Natural killer cell (primary cell): ENCODE measurements at regions of chr9 and their contacts with region 1.

Region 1: DNA sequence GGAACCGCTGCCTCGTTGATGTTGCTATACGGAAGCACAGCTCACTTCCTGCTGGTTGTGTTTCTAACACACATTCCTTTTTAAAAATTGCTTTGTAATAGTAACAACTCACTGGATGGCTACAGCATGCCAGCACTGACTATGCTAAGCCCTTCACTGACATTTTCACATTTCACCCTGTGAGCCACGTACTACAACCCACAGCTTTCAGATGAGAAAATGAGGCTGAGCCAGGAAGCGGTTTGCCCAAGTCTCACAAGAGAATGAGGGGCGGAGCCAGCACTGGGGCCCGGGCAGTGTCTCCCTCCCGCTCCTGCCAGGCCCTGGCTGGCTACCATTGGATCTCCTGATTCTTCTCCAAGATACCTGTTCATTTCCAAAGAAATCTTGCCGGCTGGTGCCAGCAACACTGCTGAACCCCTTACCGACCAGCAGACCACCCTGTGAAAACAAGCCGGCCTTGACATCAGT is 38.3 kb downstream of the FAM78A start:
- DNase-seq: peak; percentile 79 to 93
- ATAC-seq: peak; percentile 82 to 84 (median 82)
- H3K4me3 ChIP-seq: peak overlapping the region; percentile 14
- H3K4me3 Mint-ChIP-seq: peak overlapping the region; percentile 89
- H3K27ac ChIP-seq: peak overlapping the region; percentile 86
- H3K27ac Mint-ChIP-seq: peak overlapping the region; percentile 95 to 97
- H3K4me1 ChIP-seq: peaks cover 64% of the 10 kb centered on the region
- H3K4me1 Mint-ChIP-seq: peaks cover 40 to 53% of the 10 kb centered on the region in 2 donors
- H3K27me3 ChIP-seq: no peaks in the 10 kb centered on the region
- H3K27me3 Mint-ChIP-seq: no peaks in the 10 kb centered on the region
- CTCF ChIP-seq: no peak

Region 2: GRCh38 chr9:131187957-131188356 is 50.0 kb before region 1 on chr9:
- intact Hi-C with region 1: loop called (anchors 5 kb)
- DNase-seq: no peak
- ATAC-seq: no peak
- H3K4me3 ChIP-seq: no peak overlapping the region
- H3K4me3 Mint-ChIP-seq: no peak overlapping the region
- H3K27ac ChIP-seq: no peak overlapping the region
- H3K27ac Mint-ChIP-seq: no peak overlapping the region
- H3K4me1 ChIP-seq: no peaks in the 10 kb centered on the region
- H3K4me1 Mint-ChIP-seq: no peaks in the 10 kb centered on the region
- H3K27me3 ChIP-seq: no peaks in the 10 kb centered on the region
- H3K27me3 Mint-ChIP-seq: no peaks in the 10 kb centered on the region
- CTCF ChIP-seq: no peak

Region 3: GRCh38 chr9:131253891-131254491 is 16.0 kb after region 1 on chr9:
- intact Hi-C with region 1: loop called (anchors 1 kb)
- DNase-seq: no peak
- ATAC-seq: no peak
- H3K4me3 ChIP-seq: no peak overlapping the region
- H3K4me3 Mint-ChIP-seq: peak overlapping the region; percentile 91
- H3K27ac ChIP-seq: peak overlapping the region; percentile 59
- H3K27ac Mint-ChIP-seq: peak overlapping the region; percentile 95 to 99
- H3K4me1 ChIP-seq: peaks cover 84% of the 10 kb centered on the region
- H3K4me1 Mint-ChIP-seq: peaks cover 38 to 56% of the 10 kb centered on the region in 2 donors
- H3K27me3 ChIP-seq: no peaks in the 10 kb centered on the region
- H3K27me3 Mint-ChIP-seq: no peaks in the 10 kb centered on the region
- CTCF ChIP-seq: no peak

Region 4: GRCh38 chr9:131275332-131276093 is 37.5 kb after region 1 on chr9:
- intact Hi-C with region 1: loop called (anchors 1 kb)
- DNase-seq: peak in 1 of 2 donors; percentile 56
- ATAC-seq: peak in 2 of 3 donors; percentile 30 to 40
- H3K4me3 ChIP-seq: peak overlapping the region; percentile 91
- H3K4me3 Mint-ChIP-seq: peak overlapping the region; percentile 99
- H3K27ac ChIP-seq: peak overlapping the region; percentile 87
- H3K27ac Mint-ChIP-seq: peak overlapping the region; percentile 91 to 95
- H3K4me1 ChIP-seq: peaks cover 62% of the 10 kb centered on the region
- H3K4me1 Mint-ChIP-seq: peaks cover 53 to 67% of the 10 kb centered on the region in 2 donors
- H3K27me3 ChIP-seq: no peaks in the 10 kb centered on the region
- H3K27me3 Mint-ChIP-seq: no peaks in the 10 kb centered on the region
- CTCF ChIP-seq: no peak

Region 5: DNA sequence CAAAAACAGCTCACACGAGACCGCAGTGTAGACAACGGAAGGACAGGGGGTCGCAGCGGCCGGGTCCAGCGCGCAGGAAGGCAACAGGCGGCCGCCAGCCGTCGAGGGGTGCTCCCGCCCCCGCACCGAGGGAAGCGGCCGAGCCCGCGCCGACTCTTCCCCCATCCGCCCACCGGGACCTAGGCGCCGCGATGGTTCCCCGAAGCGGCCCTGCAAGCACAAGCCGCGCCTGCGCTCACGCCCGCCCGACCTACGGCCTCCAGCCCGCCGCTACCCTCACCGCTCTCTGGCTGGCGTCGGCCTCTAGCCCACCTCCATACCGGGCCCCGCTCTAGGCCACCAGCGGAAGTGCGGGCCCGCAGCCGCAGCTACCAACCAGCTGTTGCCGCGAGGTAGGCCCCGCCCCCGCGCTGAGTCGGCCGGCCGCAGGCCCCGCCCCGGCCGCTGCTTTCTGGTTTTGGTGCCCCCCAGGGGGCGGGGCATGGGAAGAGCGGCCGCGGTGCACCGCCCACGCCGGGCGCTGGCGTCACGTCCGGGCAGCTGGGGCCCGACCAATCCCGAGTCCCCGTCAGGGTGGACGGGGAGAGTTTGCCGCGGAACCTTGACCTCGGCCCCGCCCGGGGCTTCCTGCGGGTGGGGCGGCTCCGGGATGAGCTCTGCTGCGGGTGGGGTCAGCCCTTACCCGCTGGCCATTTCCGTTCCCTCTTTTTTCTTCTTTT is 1116.8 kb after region 1 on chr9 and contains the start of gene SETX:
- intact Hi-C with region 1: loop called (anchors 10 kb)
- DNase-seq: peak; percentile 92 to 97
- ATAC-seq: peak; percentile 81 to 92 (median 85)
- H3K4me3 ChIP-seq: peak within 1 kb of the TSS; percentile 95
- H3K4me3 Mint-ChIP-seq: peak within 1 kb of the TSS; percentile 96
- H3K27ac ChIP-seq: peak within 1 kb of the TSS; percentile 97
- H3K27ac Mint-ChIP-seq: peak within 1 kb of the TSS; percentile 77 to 96
- H3K4me1 ChIP-seq: peaks cover 45% of the 10 kb centered on the region
- H3K4me1 Mint-ChIP-seq: peaks cover 36 to 45% of the 10 kb centered on the region in 2 donors
- H3K27me3 ChIP-seq: no peaks in the 10 kb centered on the region
- H3K27me3 Mint-ChIP-seq: no peaks in the 10 kb centered on the region
- CTCF ChIP-seq: no peak
- total RNA-seq, gene SETX: 85.3 to 109 (median 97.7) TPM